Caco-2 (cell line): ENCODE measurements at regions of chr17 and their contacts with region 1.

Region 1: DNA sequence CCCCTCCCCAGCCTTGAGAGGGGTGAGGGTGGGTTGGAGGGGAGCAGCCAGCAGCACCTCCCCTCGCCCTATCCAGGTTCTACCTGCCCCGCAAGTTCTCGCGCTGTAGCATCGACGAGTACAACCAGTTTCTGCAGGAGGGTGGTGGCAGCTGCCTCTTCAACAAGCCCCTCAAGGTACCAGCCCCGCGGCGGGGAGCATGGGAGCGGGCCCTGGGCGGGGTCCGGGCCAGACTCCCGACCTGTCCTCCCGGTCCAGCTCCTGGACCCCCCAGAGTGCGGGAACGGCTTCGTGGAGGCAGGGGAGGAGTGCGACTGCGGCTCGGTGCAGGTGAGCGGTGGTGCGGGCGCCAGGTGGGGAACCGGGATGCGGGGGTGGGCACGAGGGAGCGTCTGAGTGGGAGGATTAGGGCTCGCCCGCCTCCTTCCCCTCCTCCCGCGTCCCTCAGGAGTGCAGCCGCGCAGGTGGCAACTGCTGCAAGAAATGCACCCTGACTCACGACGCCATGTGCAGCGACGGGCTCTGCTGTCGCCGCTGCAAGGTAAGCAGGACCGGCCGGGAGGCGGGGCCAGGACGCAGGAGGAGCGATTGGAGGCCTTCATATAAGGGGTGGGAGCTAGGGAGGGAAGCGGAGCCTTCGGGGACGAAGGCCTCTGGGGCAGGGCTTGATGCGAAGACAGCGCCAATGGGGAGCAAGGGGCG is 16.5 kb downstream of the ADAM11 start:
- DNase-seq: no peak
- H3K4me3 ChIP-seq: peak overlapping the region; percentile 84
- H3K4me3 Mint-ChIP-seq: peak overlapping the region; percentile 83
- H3K27ac Mint-ChIP-seq: peak overlapping the region; percentile 88
- H3K4me1 ChIP-seq: peaks cover 18% of the 10 kb centered on the region; the same call in 1 of the 2 replicates
- H3K4me1 Mint-ChIP-seq: no peaks in the 10 kb centered on the region
- H3K27me3 ChIP-seq: no peaks in the 10 kb centered on the region
- H3K27me3 Mint-ChIP-seq: peaks cover 3% of the 10 kb centered on the region
- CTCF ChIP-seq: no peak

Region 2: DNA sequence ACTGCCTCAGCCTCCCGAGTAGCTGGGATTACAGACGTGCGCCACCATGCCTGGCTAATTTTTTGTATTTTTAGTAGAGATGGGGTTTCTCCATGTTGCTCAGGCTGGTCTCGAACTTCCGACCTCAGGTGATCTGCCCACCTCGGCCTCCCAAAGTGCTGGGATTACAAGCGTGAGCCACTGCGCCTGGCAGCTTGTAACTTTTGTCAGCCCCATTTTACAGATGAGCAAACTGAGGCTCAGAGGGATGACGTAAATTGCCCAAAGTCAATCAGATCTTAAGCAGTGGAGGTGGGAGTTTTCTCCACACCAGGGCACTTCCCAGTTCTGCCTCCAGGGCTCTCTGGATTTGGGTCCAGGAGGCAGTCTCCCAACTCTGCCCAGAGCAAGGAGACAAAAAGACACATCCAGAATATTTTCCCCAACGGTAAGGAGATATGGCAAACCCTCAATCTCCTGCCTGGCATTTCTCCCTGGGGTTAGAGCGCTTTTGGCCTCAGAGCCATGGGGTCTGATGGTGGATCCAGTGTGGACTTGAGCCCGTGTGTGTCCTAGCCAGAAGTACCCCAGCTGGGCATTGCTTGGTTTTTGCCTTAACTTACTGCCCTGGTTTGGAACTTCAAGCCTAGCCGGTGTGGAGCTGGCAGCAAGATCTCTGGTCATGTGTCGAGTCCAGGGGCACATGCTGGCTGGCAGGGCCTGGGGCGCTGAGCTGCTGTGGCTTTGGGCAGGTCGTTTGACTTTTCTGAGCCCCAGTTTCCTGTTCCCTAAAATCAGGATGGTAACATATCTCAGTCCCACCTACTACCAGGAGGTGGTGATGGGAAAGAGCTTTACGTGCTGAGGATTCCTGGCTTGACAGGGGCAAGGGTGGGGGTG is 13.1 kb before region 1 on chr17:
- CTCF ChIA-PET with region 1: interaction called, 12 read pairs
- POLR2A ChIA-PET with region 1: no interaction called
- intact Hi-C with region 1: no loop called
- DNase-seq: no peak
- H3K4me3 ChIP-seq: no peak overlapping the region
- H3K4me3 Mint-ChIP-seq: no peak overlapping the region
- H3K27ac Mint-ChIP-seq: no peak overlapping the region
- H3K4me1 ChIP-seq: peaks cover 7% of the 10 kb centered on the region
- H3K4me1 Mint-ChIP-seq: no peaks in the 10 kb centered on the region
- H3K27me3 ChIP-seq: no peaks in the 10 kb centered on the region
- H3K27me3 Mint-ChIP-seq: no peaks in the 10 kb centered on the region
- CTCF ChIP-seq: no peak

Region 3: DNA sequence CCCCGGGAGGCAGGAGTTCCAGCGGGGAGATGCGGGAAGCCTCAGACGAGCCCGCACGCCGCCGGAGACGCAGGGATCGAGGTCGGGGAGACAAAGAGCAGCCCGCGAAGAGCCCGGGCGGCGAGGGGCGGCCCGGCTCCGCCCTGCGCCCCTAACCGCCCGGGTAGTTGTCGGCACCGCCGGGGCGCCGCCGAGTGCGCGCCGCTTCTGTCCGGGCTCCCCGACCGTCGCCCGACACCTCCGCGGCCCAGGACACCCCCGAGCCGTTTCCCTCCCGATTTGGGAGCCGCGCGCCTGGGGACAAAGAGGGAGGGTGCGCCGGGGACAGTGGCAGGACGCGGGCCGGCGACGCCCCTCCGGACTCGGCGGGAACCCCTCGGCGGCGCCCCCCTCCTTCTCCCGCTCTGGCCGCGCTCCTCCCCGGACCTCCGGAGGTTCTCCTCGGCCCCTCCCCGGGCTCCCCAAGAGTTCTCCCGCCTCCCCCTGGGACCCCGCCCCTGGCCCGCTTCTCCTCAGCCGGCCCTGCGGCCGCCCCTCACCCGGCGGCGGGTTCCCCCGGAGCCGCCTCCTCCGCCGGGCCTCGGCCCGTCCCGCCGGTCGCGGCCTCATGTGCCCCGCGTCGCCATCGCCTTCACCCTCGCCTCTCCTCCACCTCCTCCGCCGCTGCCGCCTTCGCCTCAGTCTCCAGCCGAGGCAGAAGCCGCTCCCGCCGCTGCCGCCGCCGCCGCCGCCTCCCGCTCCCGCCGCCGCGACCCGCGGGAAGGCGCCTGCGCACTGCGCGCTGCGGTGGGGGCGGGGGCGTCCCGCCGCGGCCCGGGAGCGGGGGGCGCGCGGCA is 54.5 kb after region 1 on chr17 and contains the start of gene GJC1:
- CTCF ChIA-PET with region 1: interaction called, 3 read pairs
- POLR2A ChIA-PET with region 1: no interaction called
- intact Hi-C with region 1: loop called (anchors 1 kb)
- DNase-seq: peak; percentile 58 to 65
- H3K4me3 ChIP-seq: peak within 1 kb of the TSS; percentile 82
- H3K4me3 Mint-ChIP-seq: peak within 1 kb of the TSS; percentile 87
- H3K27ac Mint-ChIP-seq: peak within 1 kb of the TSS; percentile 70
- H3K4me1 ChIP-seq: peaks cover 28% of the 10 kb centered on the region
- H3K4me1 Mint-ChIP-seq: peaks cover 8% of the 10 kb centered on the region
- H3K27me3 ChIP-seq: no peaks in the 10 kb centered on the region
- H3K27me3 Mint-ChIP-seq: no peaks in the 10 kb centered on the region
- CTCF ChIP-seq: no peak
- total RNA-seq, gene GJC1: 33.5 and 34.6 TPM in 2 replicates

Region 4: GRCh38 chr17:44864866-44865660 is 89.8 kb after region 1 on chr17:
- CTCF ChIA-PET with region 1: interaction called, 23 read pairs
- POLR2A ChIA-PET with region 1: no interaction called
- intact Hi-C with region 1: loop called (anchors 1 kb)
- DNase-seq: peak; percentile 72 to 81
- H3K4me3 ChIP-seq: no peak overlapping the region
- H3K4me3 Mint-ChIP-seq: no peak overlapping the region
- H3K27ac Mint-ChIP-seq: no peak overlapping the region
- H3K4me1 ChIP-seq: no peaks in the 10 kb centered on the region
- H3K4me1 Mint-ChIP-seq: no peaks in the 10 kb centered on the region
- H3K27me3 ChIP-seq: no peaks in the 10 kb centered on the region
- H3K27me3 Mint-ChIP-seq: no peaks in the 10 kb centered on the region
- CTCF ChIP-seq: peak; percentile 82 to 86

Region 5: GRCh38 chr17:44878627-44879221 is 103.4 kb after region 1 on chr17:
- CTCF ChIA-PET with region 1: interaction called, 11 read pairs
- POLR2A ChIA-PET with region 1: no interaction called
- intact Hi-C with region 1: loop called (anchors 1 kb)
- DNase-seq: peak in 1 of 2 experiments; percentile 52
- H3K4me3 ChIP-seq: no peak overlapping the region
- H3K4me3 Mint-ChIP-seq: no peak overlapping the region
- H3K27ac Mint-ChIP-seq: no peak overlapping the region
- H3K4me1 ChIP-seq: no peaks in the 10 kb centered on the region
- H3K4me1 Mint-ChIP-seq: no peaks in the 10 kb centered on the region
- H3K27me3 ChIP-seq: no peaks in the 10 kb centered on the region
- H3K27me3 Mint-ChIP-seq: no peaks in the 10 kb centered on the region
- CTCF ChIP-seq: peak; percentile 52 to 59

Region 6: DNA sequence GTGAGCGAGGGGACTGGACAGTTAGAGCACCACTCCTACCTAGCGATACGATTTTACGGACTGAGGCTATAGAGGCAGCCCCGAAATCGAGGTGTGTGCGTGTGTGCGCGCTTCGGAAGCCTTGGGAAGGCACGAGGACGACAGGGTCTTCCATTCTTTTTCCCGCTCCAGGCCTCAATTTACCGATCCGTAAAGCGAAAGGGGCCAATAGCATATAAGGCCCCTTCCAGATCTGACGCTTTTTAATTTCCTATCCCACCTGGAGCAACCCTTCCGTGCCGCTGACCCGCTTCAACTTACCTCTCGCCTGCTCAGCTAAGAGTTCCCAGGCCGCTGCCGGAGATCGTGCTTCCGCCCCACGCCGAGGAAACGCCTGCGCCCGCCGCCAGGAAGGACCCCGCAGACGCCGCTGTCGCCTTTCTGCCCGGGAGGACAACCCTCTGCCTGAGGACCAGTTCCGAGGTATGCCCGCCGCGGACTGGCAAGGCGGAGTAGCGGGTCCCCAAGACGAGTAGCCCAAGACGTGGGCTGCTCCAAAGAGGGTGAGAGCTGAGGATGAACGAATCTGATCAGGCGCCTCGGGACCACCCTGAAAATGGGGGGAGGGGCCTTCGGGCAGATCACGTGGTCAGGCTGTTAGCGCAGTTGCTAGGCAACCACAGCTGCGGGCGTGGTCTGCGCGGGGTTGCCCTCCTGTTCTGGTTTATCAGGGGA is 123.9 kb after region 1 on chr17 and contains the start of gene EFTUD2:
- CTCF ChIA-PET with region 1: interaction called, 11 read pairs
- POLR2A ChIA-PET with region 1: interaction called, 3 read pairs
- intact Hi-C with region 1: no loop called
- DNase-seq: peak; percentile 93 to 94
- H3K4me3 ChIP-seq: peak within 1 kb of the TSS; percentile 60
- H3K4me3 Mint-ChIP-seq: peak within 1 kb of the TSS; percentile 77
- H3K27ac Mint-ChIP-seq: peak within 1 kb of the TSS; percentile 100
- H3K4me1 ChIP-seq: no peaks in the 10 kb centered on the region
- H3K4me1 Mint-ChIP-seq: peaks cover 7% of the 10 kb centered on the region
- H3K27me3 ChIP-seq: no peaks in the 10 kb centered on the region
- H3K27me3 Mint-ChIP-seq: no peaks in the 10 kb centered on the region
- CTCF ChIP-seq: no peak
- total RNA-seq, gene EFTUD2: 175 and 186 TPM in 2 replicates

Region 7: DNA sequence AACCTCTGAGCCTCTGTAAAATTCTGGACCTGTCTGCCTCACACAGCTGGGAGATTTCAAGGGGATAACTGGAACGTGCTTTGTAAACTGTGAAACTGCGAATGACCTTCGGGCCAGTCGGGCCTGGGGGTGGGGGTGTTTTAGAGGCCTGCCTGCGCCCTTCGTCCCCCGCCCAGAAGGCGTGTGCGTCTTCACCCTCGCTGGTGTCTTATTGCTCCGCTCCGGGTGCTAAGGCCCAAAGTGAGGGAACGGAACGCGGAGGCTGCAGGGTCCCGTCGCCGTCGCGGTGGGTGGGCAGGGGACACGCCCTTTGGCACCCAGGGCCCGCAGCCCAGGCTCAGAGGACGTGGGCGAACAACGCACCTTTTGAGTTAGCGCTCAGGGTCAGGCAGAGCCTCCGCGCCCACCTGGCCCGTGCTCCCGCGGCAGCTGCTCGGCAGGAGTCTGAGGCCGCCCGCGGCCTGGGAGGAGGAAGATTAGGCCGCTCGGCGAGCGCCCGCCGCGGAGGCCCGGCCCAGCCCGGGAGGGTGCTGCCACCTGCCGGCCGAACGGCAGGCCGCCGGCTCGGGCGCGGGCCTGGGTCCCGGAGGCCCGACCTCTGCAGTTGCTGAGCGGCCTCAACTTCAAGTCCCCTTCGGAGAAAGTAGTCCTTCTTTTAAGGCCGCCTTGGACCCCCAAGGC is 246.5 kb after region 1 on chr17:
- CTCF ChIA-PET with region 1: interaction called, 3 read pairs
- POLR2A ChIA-PET with region 1: no interaction called
- intact Hi-C with region 1: loop called (anchors 1 kb)
- DNase-seq: peak; percentile 72 to 89
- H3K4me3 ChIP-seq: peak overlapping the region; percentile 57
- H3K4me3 Mint-ChIP-seq: peak overlapping the region; percentile 70
- H3K27ac Mint-ChIP-seq: no peak overlapping the region
- H3K4me1 ChIP-seq: peaks cover 18% of the 10 kb centered on the region
- H3K4me1 Mint-ChIP-seq: peaks cover 17% of the 10 kb centered on the region
- H3K27me3 ChIP-seq: no peaks in the 10 kb centered on the region
- H3K27me3 Mint-ChIP-seq: peaks cover 6% of the 10 kb centered on the region
- CTCF ChIP-seq: peak; percentile 62 to 92